ENCODE measurements at regions of chr10 and their contacts with region 1.

Region 1: DNA sequence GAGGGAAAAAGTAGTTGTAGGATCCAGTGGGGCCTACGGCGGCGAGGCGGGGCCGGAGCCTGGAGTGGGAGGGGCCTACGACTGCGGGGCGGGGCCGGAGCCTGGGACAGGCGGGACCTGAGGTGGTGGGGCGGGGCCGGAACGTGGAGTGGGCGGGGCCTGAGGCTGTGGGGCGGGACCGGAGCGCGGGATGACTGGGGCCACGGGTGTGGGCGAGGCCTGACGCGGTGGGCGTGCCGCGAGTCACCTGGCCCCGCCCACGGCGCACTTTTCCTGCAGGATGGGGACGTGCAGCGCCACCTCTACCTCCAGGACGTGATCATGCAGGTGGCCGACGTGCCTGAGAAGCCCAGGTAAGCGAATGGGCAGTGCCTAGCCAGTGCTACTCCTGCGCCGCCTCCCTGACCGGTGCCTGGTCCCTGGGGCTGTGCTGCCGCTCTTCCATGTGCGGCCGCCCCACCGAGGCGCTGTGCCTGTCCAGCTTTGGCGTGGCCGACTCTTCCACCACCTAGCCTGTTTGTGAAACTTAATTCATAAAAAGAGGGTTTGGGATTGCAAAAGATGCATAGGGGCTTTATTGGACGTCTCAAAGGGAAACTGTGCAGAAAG is 501 bp downstream of the ZNF511 start:
- DNase-seq: peak; percentile 98
- H3K4me3 ChIP-seq: peak overlapping the region; percentile 95
- H3K27ac ChIP-seq: peak overlapping the region; percentile 97
- H3K4me1 ChIP-seq: no peaks in the 10 kb centered on the region
- H3K27me3 ChIP-seq: no peaks in the 10 kb centered on the region
- CTCF ChIP-seq: no peak

Region 2: DNA sequence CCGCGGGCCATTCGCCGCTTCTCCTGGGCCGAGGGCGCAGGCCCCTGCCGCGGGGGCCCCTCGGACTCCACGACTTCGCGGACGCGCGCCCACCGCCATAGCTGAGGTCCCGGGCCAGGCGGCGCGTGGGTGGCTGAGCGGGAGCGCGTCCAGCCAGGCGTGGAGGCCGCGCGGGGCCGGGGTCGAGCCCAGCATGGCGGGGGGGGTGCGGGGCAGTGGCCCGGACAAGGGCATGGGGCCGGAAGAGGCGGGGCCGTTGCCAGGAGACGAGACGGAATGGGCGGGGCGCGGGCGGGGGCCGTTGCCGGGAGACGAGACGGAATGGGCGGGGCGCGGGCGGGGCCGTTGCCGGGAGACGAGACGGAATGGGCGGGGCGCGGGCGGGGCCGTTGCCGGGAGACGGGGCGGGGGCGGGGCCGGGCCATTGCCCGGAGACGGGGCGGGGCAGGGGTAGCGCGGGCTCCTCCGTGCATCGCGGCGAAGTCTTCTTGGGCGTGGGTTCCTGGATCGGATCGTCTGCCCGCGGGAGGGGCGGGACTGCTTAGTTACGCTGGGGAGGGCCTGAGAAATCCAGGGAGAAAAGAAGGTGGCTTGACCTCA is 47.4 kb before region 1 on chr10:
- intact Hi-C with region 1: loop called (anchors 5 kb)
- DNase-seq: peak; percentile 91
- H3K4me3 ChIP-seq: peak overlapping the region; percentile 78
- H3K27ac ChIP-seq: peak overlapping the region; percentile 89
- H3K4me1 ChIP-seq: peaks cover 42% of the 10 kb centered on the region
- H3K27me3 ChIP-seq: no peaks in the 10 kb centered on the region
- CTCF ChIP-seq: no peak

Region 3: GRCh38 chr10:133438711-133439273 is 129.6 kb after region 1 on chr10:
- intact Hi-C with region 1: no loop called
- DNase-seq: no peak
- H3K4me3 ChIP-seq: no peak overlapping the region
- H3K27ac ChIP-seq: no peak overlapping the region
- H3K4me1 ChIP-seq: no peaks in the 10 kb centered on the region
- H3K27me3 ChIP-seq: no peaks in the 10 kb centered on the region
- CTCF ChIP-seq: peak; percentile 27